Left cardiac atrium (tissue), 4 donors: ENCODE measurements at regions of chr13 and their contacts with region 1.

Region 1: DNA sequence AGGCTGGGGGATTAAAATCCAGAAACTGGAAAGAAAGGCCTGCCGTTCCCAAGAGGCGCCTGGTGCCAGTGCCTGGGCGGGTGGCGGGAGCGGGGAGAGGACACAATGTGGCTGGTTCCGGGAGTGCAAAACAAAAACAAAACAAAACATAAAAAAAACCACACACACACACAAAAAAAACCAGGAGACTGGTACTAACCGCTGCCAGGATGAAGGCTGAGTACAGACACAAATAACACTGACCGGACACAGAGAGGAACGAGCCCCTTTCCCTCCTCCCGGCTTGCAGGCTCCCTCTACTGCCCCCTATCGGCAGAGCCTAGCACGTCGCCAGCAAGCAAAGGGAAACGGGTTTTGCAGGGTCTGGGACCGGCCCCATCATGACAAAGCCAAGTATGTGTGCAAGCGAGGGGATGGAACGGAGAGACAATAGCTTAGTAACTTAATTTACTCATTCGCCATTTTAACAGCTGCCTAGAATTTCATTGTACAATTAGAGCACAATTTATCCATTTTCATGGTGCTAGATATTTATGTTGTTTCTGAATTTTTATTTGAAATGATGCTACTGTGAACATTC is 17.9 kb upstream of the ZDHHC20 start:
- DNase-seq: peak; percentile 85
- ATAC-seq: peak; percentile 86

Region 2: DNA sequence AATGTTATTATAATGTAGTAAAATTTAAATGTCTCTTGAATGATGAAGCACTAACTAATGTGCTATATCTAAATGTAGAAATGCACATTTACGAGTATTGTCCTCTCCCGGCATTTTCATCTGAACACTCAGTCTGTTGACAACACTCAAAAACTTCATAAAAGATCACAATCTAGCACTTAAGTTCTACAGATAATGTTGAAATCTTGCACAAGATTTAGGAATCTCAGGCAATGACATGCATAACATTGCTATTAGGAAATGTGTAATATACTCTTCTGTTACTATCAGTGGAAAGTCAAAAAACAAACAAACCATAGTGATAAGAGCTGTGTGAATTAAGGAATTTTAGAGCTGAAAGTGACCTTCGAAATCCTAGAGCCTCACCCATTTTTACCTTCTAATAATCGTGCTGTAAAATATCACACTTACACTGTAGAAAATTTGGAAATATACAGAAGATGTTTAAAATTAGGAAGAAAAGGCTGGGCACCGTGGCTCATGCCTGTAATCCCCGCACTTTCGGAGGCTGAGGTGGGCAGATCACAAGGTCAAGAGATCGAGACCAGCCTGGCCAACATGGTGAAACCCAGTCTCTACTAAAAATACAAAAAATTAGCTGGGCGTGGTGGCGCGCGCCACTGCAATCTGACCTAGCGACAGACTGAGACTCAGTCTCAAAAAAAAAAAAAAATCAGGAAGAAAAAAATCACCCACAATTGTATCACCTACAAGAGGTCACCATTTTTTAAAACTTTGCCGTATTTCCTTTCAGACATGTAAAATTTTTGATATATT is 536.7 kb before region 1 on chr13:
- intact Hi-C with region 1: loop called in 1 of 2 experiments (anchors 2 kb)
- DNase-seq: no peak
- ATAC-seq: no peak

Region 3: GRCh38 chr13:21106089-21106488 is 370.9 kb before region 1 on chr13:
- intact Hi-C with region 1: loop called (anchors 1 to 10 kb)
- DNase-seq: no peak
- ATAC-seq: no peak

Region 4: GRCh38 chr13:21115231-21115630 is 361.8 kb before region 1 on chr13:
- intact Hi-C with region 1: loop called (anchors 1 to 10 kb)
- DNase-seq: no peak
- ATAC-seq: no peak

Region 5: DNA sequence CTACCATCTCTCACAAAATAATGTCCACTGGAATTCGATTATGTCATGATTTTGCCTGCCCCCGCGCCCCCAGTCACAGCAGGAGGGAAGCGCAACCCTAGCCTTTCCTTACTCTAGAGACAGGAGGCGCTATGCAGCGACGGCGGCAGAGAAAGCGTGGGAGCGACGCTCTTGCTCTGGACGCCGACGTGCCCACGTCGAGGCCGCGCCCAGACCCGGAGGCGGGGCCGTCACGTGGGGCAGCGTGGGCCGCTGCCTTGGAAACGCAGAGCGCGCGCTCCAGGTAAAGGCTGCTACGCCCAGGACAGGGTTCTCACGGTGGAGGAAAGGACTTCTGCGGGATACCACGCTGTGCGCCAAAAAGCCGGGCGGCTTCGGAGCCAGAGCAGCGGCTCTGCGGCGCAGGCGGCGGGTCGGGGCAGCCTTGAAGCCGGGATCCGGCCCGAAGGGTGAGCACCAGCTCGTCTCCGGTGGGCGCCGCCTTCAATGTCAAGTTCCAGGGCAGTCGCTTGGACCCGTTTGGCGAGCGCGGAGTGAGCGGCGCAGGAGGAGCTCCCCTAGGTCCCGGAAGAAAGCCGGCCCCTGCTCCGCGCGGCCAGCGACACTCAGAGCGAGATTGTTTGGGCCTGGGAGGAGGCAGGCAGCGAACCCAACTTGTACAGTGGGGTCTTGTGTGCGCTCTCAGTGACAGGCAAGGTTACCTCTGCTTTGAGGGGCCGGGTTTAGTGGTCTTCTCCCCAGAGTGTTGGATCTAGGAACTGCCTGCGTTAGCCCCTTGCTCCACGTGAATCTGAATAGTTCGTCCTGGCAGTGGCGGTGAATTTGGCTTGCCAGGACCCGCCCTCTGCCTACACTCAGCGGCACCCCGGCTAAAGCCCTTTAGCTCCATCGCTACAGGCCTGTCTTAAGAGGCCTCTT is 178.8 kb before region 1 on chr13:
- intact Hi-C with region 1: loop called in 1 of 2 experiments (anchors 5 kb)
- DNase-seq: peak; percentile 87
- ATAC-seq: peak; percentile 100

Region 6: GRCh38 chr13:22061351-22061805 is 584.4 kb after region 1 on chr13:
- intact Hi-C with region 1: no loop called
- DNase-seq: no peak
- ATAC-seq: peak; percentile 41 to 46